Heart right ventricle (tissue), 16 donors: ENCODE measurements at regions of chr9 and their contacts with region 1.

Region 1: DNA sequence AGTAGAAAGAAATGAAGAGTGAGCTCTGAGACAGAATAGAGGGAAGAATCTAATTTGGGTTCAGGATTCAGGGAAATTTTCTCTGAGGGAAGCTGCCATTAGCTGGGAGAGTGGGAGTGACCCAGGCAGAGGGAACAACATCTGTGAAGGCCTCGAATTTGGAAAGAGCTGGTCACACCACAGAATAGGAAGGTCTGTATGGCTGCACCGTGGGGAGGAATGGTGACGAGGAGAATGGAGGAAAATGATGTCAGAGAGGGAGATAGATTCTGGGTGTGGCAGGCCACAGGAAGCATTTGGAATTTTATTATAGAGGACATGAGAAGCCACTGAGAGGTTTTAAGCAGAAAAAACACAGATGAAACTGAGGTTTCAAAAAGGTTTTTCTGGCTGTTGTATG is 98.5 kb downstream of the MAMDC2 start:
- DNase-seq: no peak
- ATAC-seq: peak in 1 of 8 donors; percentile 47
- H3K4me3 ChIP-seq: no peak overlapping the region
- H3K27ac ChIP-seq: no peak overlapping the region
- H3K4me1 ChIP-seq: no peaks in the 10 kb centered on the region
- H3K27me3 ChIP-seq: no peaks in the 10 kb centered on the region
- CTCF ChIP-seq: no peak

Region 2: GRCh38 chr9:70060883-70061507 is 81.1 kb before region 1 on chr9:
- intact Hi-C with region 1: no loop called
- DNase-seq: no peak
- ATAC-seq: no peak
- H3K4me3 ChIP-seq: no peak overlapping the region
- H3K27ac ChIP-seq: no peak overlapping the region
- H3K4me1 ChIP-seq: peaks cover 0 to 39% (median 0%) of the 10 kb centered on the region in 9 donors
- H3K27me3 ChIP-seq: no peaks in the 10 kb centered on the region
- CTCF ChIP-seq: no peak

Region 3: DNA sequence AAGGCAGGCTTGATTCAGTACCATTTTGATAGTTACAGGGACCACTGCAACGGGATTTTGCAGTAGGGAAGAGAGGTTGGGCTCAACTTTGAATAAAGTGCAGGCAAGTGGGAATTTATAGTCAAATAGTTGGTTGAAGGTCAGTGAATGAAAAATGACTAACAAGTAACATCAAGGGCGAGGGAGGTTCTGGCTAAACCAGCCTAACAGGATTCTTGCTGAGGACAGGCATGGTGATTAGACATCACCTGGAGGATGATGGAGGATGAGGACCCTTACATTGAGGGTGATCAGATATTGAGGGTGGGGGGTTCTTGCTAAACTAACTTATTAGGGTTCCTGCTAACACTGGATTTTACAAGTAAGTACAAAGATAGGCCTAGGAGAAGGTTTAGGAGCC is 50.6 kb after region 1 on chr9:
- intact Hi-C with region 1: loop called in 1 of 10 experiments (anchors 5 kb)
- DNase-seq: no peak
- ATAC-seq: no peak
- H3K4me3 ChIP-seq: no peak overlapping the region
- H3K27ac ChIP-seq: no peak overlapping the region
- H3K4me1 ChIP-seq: no peaks in the 10 kb centered on the region
- H3K27me3 ChIP-seq: no peaks in the 10 kb centered on the region
- CTCF ChIP-seq: no peak

Region 4: GRCh38 chr9:70297141-70297540 is 155.0 kb after region 1 on chr9:
- intact Hi-C with region 1: loop called in 1 of 10 experiments (anchors 5 kb)
- DNase-seq: no peak
- ATAC-seq: no peak
- H3K4me3 ChIP-seq: no peak overlapping the region
- H3K27ac ChIP-seq: no peak overlapping the region
- H3K4me1 ChIP-seq: no peaks in the 10 kb centered on the region
- H3K27me3 ChIP-seq: no peaks in the 10 kb centered on the region
- CTCF ChIP-seq: no peak